Activated CD4-positive, alpha-beta memory T cell treated with anti-CD3 and anti-CD28 coated beads for 36 hours (primary cell): ENCODE measurements at regions of chr7 and their contacts with region 1.

Region 1: DNA sequence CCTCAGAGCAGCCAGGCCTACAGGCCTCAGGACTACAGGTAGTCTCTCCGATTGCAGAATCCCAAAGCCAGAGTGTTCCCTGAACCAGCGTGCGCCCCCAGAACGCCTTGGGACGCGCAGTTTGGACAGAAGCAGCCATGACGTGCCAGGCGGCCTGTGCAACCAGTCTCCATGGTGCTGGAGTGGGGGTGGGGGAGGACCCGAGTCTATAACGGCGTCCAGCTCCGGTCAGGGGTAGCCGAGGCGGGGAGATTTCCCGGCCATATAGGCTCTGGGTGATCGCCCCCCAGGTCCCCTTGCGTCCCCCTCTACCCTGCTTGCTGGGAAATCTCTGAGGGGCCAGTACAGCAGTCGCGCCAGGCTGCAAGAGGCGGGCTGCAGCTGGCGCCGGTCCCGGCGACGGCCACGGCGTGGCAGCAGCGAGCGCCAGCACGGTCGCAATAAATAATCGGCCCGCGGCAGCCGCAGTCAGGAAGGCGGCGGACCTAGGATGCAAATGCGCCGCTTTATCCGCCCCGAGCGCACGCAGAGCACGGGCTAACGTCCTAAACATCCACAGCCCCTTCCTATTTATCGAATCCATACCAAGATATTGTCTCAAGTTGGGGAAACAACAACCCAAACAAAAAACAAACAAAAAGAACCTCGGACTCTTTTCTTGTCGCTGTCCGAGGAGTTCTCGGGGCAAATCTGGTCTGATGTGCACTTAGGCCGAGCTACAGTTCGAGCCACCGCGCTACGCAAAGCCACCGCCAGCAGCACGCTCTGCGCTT is 1.6 kb downstream of the HOXA3 start:
- DNase-seq: peak; percentile 76
- H3K4me3 Mint-ChIP-seq: peak overlapping the region; percentile 52
- H3K27ac Mint-ChIP-seq: no peak overlapping the region
- H3K4me1 Mint-ChIP-seq: peaks cover 38% of the 10 kb centered on the region
- H3K27me3 Mint-ChIP-seq: peaks cover 86% of the 10 kb centered on the region

Region 2: DNA sequence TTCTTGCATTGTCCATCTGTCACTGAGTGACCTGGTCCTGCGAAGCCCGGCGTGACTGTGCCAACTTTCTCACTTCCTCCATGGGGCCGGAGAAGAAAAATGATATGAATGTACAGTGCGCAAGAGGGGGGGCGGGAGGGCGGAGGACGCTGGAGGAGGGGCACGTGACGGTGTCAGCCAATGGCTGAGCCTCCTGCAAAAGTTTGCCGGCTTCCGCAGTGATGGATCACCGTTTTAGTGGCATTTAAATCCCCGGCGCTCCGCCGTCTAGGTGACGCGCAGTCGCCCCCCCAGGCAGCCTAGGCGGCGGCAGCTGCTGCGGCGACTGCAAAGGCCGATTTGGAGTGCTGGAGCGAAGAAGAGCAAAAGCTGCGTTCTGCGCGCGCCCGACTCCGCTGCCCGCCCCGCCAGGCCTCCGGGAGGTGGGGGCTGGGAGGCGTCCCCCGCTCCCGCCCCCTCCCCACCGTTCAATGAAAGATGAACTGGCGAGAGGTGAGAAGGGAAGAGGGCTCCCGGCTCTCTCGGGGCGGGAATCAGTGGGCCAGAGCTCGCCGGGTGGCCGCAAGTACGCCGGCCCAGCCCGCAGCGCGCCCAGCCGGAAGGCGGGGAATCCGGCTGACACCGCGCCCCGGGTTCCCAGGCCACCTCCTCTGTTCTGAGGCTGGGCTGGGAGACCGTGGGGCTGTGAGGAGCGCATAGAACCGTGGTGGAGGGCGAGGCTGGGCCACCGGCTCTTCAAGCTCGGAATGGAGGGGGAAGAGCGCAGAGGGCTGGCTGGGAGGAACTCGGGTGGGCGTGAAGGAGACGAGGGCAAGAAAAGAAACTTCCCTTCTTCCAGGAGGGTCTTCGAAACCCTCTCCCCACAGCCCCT is 54.6 kb before region 1 on chr7 and contains the start of gene HOXA1:
- CTCF ChIA-PET with region 1: interaction called, 10 read pairs
- POLR2A ChIA-PET with region 1: interaction called, 4 read pairs
- intact Hi-C with region 1: no loop called
- DNase-seq: peak; percentile 85
- H3K4me3 Mint-ChIP-seq: peak within 1 kb of the TSS; percentile 66
- H3K27ac Mint-ChIP-seq: no peak within 1 kb of the TSS
- H3K4me1 Mint-ChIP-seq: peaks cover 15% of the 10 kb centered on the region
- H3K27me3 Mint-ChIP-seq: peaks cover 62% of the 10 kb centered on the region
- total RNA-seq, gene HOXA1: 0.29 to 0.43 TPM

Region 3: DNA sequence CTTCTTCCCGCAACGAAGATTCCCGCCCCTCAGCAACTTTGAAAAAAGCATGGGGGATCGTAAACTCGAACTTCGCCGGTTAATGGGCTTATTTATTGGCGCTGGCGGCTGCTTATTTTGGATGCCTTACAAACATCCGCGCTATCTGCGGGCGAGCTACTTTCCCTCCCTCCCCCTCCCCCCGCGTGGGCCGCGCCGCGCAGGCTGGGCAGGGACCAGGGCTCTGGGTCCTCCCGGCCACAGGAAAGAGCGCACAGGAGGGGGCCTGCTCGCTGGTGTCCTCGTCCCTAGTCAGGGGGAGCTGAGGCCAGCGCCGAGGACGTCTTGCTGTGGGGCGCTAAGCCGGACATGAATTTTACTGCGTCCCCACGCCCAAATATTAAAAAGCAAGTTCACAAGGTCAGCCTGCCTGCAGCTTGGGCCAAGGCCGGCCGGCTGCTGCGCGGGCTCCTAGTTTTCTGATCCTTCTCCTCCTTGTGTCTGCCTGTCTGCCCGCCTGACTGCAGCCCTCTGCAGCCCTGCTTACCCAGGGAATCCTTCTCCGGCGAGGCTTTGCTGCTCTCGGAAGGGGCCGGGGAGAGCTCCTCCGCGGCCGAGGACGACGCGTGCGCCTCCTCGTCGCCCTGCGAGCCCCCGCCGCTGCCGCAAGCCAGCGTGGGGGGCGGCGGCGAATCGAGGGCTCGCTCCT is 22.2 kb after region 1 on chr7:
- CTCF ChIA-PET with region 1: interaction called, 10 read pairs
- POLR2A ChIA-PET with region 1: no interaction called
- intact Hi-C with region 1: loop called (anchors 2 kb)
- DNase-seq: peak; percentile 23
- H3K4me3 Mint-ChIP-seq: no peak overlapping the region
- H3K27ac Mint-ChIP-seq: no peak overlapping the region
- H3K4me1 Mint-ChIP-seq: peaks cover 23% of the 10 kb centered on the region
- H3K27me3 Mint-ChIP-seq: peaks cover 72% of the 10 kb centered on the region